Endothelial cell of umbilical vein (primary cell): ENCODE measurements at regions of chr1 and their contacts with region 1.

Region 1: DNA sequence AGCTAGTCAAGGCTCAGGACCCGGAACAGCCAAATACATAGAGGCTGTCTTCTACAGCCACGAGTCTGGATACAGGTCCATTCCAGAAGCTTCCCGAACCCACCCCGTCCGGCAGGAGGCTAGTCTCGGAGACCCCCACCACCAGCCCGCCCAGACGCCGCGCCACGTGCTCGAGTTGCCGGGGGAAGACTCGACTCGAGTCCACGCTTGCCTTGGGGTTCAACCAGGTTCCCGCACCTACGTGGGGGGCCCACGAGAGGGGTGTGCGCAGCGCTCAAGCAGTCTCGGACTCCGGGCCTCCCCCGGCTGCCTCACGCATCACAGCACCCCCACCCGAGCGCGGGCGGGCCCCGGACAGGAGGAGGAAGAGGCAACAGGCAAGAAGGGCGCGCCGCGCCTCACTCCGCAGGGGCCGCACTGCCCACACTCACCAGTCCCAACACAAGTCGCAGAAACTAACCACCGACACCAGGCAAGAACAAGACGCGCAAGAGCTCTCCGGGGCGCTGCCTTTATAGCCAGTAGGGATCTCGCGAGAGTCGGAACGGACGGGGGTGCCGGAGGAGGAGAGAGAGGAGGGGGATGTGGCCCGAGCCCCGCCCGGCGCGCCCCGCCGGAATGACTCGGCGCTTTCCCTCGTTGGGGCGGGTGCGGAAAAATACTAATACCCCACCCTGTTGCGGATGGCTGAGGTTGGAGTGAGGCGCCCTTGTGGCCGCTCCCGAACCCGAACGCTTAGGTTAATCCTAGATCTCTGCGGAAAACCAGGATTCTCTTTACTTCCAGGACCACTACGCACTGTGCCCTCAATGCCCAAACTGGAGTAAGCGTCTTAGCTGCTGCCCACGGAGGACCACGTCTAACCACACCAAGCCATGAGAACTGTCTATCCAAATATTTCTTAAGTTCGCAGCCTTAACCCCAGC is at the start of gene PRDX1:
- DNase-seq: peak; percentile 96
- H3K4me3 ChIP-seq: peak within 1 kb of the TSS; percentile 79 to 86 (median 80)
- H3K27ac ChIP-seq: peak within 1 kb of the TSS; percentile 87
- H3K4me1 ChIP-seq: peaks cover 19% of the 10 kb centered on the region
- H3K27me3 ChIP-seq: no peaks in the 10 kb centered on the region
- CTCF ChIP-seq: no peak
- POLR2A ChIP-seq: peak; percentile 100
- total RNA-seq, gene PRDX1: 681 and 685 TPM in 2 replicates

Region 2: DNA sequence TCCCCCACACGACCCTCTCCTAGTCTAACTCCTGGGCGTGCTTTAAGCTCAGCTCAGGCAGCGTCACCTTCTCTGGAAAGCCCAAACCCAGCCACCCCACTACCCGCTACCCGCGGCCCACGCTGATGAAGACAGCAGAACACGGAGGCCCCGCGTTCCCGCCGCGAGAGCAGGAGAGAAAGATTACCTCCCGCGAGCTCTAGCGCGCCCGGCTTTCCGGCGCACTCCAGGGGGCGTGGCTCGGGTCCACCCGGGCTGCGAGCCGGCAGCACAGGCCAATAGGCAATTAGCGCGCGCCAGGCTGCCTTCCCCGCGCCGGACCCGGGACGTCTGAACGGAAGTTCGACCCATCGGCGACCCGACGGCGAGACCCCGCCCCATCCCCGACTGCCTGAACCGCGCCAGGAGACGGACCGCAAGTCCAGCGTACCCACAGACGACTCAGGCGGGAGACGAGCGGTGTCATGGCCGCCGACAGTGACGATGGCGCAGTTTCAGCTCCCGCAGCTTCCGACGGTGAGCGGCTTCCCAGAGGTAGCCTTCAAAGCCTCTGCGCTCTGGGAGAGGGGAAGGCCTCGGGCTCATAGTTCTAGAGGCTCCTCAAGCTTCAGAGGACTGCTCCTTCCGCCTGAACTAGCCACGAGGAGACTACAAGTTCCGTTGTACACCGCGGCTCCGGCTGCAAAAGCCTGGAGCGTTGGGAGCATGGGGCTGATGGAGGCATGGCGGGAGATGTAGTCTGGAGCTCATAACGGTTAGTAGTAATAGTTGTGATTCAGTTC is 181.7 kb before region 1 on chr1 and contains the starts of genes MUTYH and TOE1:
- CTCF ChIA-PET with region 1: no interaction called
- POLR2A ChIA-PET with region 1: interaction called, 25 read pairs
- dilution Hi-C with region 1: no loop called
- intact Hi-C with region 1: no loop called
- DNase-seq: peak; percentile 94
- H3K4me3 ChIP-seq: peak within 1 kb of the TSS; percentile 48 to 82 (median 56)
- H3K27ac ChIP-seq: peak within 1 kb of the TSS; percentile 85
- H3K4me1 ChIP-seq: peaks cover 22% of the 10 kb centered on the region
- H3K27me3 ChIP-seq: no peaks in the 10 kb centered on the region
- CTCF ChIP-seq: no peak
- POLR2A ChIP-seq: peak; percentile 72
- total RNA-seq, gene MUTYH: 14.3 and 16.6 TPM in 2 replicates
- total RNA-seq, gene TOE1: 15.8 and 16.3 TPM in 2 replicates

Region 3: GRCh38 chr1:45543581-45544417 is 22.1 kb after region 1 on chr1:
- CTCF ChIA-PET with region 1: interaction called, 5 read pairs
- POLR2A ChIA-PET with region 1: interaction called, 83 read pairs
- dilution Hi-C with region 1: no loop called
- intact Hi-C with region 1: loop called (anchors 1 kb)
- DNase-seq: peak; percentile 89
- H3K4me3 ChIP-seq: no peak overlapping the region
- H3K27ac ChIP-seq: peak overlapping the region; percentile 42
- H3K4me1 ChIP-seq: peaks cover 27% of the 10 kb centered on the region
- H3K27me3 ChIP-seq: no peaks in the 10 kb centered on the region
- CTCF ChIP-seq: no peak
- POLR2A ChIP-seq: no peak

Region 4: DNA sequence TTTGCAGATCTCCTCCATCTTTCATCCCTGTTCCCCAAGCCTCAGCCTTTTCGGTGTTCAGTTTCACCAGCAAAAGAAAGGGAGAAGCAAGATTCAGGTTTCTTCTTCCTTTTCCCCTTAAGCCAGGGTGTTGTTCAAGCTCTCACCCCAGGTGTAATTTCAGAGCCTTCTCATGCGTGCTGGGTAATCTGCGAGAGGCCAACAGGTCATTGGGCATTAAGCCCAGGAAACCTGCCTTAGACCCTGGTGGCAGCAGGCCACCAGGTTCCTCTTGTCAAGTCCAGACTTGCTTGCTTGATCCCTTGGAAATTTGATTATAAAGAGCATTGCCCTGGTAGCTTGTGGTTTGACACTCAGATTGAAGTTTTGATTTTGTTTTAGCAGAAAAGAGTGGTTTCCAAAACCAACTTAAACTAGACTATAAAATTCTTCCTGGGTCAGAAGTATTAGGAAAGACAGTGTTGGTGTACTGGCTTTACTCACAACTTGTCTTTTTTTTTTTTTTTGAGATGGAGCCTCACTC is 35.8 kb after region 1 on chr1:
- CTCF ChIA-PET with region 1: no interaction called
- POLR2A ChIA-PET with region 1: interaction called, 52 read pairs
- dilution Hi-C with region 1: no loop called
- intact Hi-C with region 1: no loop called
- DNase-seq: no peak
- H3K4me3 ChIP-seq: no peak overlapping the region
- H3K27ac ChIP-seq: no peak overlapping the region
- H3K4me1 ChIP-seq: no peaks in the 10 kb centered on the region
- H3K27me3 ChIP-seq: no peaks in the 10 kb centered on the region
- CTCF ChIP-seq: no peak
- POLR2A ChIP-seq: no peak

Region 5: GRCh38 chr1:45569962-45570581 is 48.4 kb after region 1 on chr1:
- CTCF ChIA-PET with region 1: interaction called, 60 read pairs
- POLR2A ChIA-PET with region 1: interaction called, 49 read pairs
- dilution Hi-C with region 1: no loop called
- intact Hi-C with region 1: loop called (anchors 2 kb)
- DNase-seq: peak; percentile 81
- H3K4me3 ChIP-seq: no peak overlapping the region
- H3K27ac ChIP-seq: no peak overlapping the region
- H3K4me1 ChIP-seq: no peaks in the 10 kb centered on the region
- H3K27me3 ChIP-seq: no peaks in the 10 kb centered on the region
- CTCF ChIP-seq: peak; percentile 89 to 95
- POLR2A ChIP-seq: no peak

Region 6: GRCh38 chr1:45669859-45670655 is 148.4 kb after region 1 on chr1:
- CTCF ChIA-PET with region 1: no interaction called
- POLR2A ChIA-PET with region 1: no interaction called
- dilution Hi-C with region 1: no loop called
- intact Hi-C with region 1: no loop called
- DNase-seq: peak; percentile 29
- H3K4me3 ChIP-seq: no peak overlapping the region
- H3K27ac ChIP-seq: peak overlapping the region; percentile 16
- H3K4me1 ChIP-seq: peaks cover 9% of the 10 kb centered on the region
- H3K27me3 ChIP-seq: no peaks in the 10 kb centered on the region
- CTCF ChIP-seq: no peak
- POLR2A ChIP-seq: no peak